OCI-LY7 (cell line): ENCODE measurements at regions of chr10 and their contacts with region 1.

Region 1: GRCh38 chr10:133127291-133128194 is 32.5 kb upstream of the KNDC1 start:
- DNase-seq: peak; percentile 68
- H3K4me3 ChIP-seq: no peak overlapping the region
- H3K27ac ChIP-seq: no peak overlapping the region
- H3K4me1 ChIP-seq: peaks cover 14% of the 10 kb centered on the region
- CTCF ChIP-seq: no peak

Region 2: DNA sequence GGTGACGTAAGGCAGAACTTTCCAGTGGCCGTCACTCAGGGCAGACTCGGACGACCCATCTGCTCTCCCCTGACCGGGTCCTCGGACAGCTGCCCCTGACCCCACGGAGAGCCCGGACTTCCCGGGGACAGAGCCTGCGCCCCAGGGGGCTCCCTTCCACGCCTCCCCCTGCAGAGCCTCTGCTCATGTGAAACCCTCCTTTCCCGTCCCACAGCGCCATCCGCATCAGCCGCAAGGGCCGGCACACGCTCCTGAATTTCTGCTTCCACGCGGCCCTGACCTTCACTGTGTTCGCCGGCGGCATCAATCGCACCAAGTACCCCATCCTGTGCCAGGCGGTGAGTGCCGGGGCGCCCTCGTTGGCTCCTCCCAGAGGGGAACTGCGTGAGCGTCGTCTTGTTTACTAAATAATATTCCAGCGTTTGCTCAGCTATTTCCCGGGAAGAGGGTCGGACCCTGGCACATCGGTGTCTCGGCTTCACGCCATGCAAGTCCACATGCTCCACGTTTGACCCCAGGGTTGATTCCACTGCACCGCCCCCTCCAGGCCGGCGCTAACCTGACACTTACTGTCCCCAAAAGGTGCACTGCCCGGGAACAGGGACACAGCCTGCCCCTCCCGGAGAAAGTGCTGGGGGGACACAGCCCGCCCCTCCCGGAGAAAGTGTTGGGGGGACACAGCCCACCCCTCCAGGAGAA is 29.0 kb before region 1 on chr10:
- CTCF ChIA-PET with region 1: interaction called, 10 read pairs
- POLR2A ChIA-PET with region 1: no interaction called
- intact Hi-C with region 1: no loop called
- DNase-seq: no peak
- H3K4me3 ChIP-seq: no peak overlapping the region
- H3K27ac ChIP-seq: no peak overlapping the region
- H3K4me1 ChIP-seq: no peaks in the 10 kb centered on the region
- CTCF ChIP-seq: no peak